ENCODE measurements at regions of chr17 and their contacts with region 1.

Region 1: DNA sequence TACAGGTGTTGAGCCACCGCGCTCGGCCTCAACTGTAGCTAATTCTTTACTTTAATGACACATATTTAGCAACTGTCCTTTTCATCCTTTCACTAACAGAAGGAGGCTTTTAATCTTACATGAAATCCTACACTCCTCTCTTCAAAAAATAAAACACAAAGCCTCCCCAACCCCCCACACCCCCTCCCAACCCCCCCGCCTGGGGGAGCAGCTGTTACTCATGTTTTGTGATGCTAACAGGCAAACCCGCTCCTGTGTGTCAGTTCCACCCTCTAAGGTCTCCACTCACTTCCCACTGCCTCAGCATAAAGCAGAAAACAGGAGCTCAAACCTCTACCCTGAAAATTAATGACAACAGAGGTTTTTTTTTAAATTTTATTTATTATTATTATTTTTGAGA is 55.4 kb upstream of the SLC25A19 start:
- DNase-seq: no peak
- ATAC-seq: no peak
- H3K4me3 ChIP-seq: peak overlapping the region in 1 of 10 donors; percentile 6
- H3K27ac ChIP-seq: peak overlapping the region in 1 of 10 donors; percentile 73
- H3K4me1 ChIP-seq: peaks cover 3 to 100% (median 48%) of the 10 kb centered on the region in 9 donors
- H3K27me3 ChIP-seq: no peaks in the 10 kb centered on the region
- CTCF ChIP-seq: no peak

Region 2: DNA sequence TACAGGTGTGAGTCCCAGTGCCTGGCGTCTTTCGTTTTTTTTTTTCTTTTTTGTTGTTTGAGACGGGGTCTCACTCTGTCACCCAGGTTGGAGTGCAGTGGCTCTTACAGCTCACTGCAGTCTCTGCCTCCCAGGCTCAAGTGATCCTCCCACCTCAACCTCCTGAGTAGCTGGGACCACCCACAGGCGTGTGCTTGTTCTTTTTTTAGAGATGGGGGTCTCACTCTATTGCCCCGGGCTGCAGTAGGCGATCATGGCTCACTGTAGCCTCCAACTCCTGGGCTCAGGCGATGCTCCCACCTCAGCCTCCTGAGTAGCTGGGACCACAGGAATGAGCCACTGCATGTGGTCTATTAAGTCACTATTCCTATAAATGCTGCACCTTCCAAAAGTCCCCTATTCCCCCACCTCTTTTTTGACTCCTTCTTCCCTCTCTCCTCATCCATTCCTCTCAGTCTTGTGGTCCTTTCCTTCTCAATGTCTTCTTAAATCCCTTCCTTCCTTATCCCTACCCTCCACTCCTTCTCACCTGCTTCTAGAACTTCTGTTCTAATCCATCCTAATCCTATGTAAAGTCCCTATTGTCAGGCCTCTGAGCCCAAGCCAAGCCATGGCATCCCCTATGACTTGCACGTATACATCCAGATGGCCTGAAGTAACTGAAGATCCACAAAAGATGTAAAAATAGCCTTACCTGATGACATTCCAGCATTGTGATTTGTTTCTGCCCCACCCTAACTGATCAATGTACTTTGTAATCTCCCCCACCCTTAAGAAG is 92.4 kb before region 1 on chr17:
- intact Hi-C with region 1: no loop called
- DNase-seq: no peak
- ATAC-seq: peak in 1 of 8 donors; percentile 38
- H3K4me3 ChIP-seq: no peak overlapping the region
- H3K27ac ChIP-seq: peak overlapping the region in 1 of 10 donors; percentile 65
- H3K4me1 ChIP-seq: peaks cover 0 to 37% (median 26%) of the 10 kb centered on the region in 9 donors
- H3K27me3 ChIP-seq: no peaks in the 10 kb centered on the region
- CTCF ChIP-seq: no peak

Region 3: GRCh38 chr17:75380315-75380714 is 35.6 kb after region 1 on chr17:
- intact Hi-C with region 1: loop called in 2 of 10 experiments (anchors 5 kb)
- DNase-seq: no peak
- ATAC-seq: no peak
- H3K4me3 ChIP-seq: no peak overlapping the region
- H3K27ac ChIP-seq: no peak overlapping the region
- H3K4me1 ChIP-seq: peaks cover 0 to 44% (median 11%) of the 10 kb centered on the region in 9 donors
- H3K27me3 ChIP-seq: no peaks in the 10 kb centered on the region
- CTCF ChIP-seq: no peak

Measured in heart right ventricle (tissue), 16 donors.